Natural killer cell (primary cell): ENCODE measurements at regions of chr1 and their contacts with region 1.

Region 1: DNA sequence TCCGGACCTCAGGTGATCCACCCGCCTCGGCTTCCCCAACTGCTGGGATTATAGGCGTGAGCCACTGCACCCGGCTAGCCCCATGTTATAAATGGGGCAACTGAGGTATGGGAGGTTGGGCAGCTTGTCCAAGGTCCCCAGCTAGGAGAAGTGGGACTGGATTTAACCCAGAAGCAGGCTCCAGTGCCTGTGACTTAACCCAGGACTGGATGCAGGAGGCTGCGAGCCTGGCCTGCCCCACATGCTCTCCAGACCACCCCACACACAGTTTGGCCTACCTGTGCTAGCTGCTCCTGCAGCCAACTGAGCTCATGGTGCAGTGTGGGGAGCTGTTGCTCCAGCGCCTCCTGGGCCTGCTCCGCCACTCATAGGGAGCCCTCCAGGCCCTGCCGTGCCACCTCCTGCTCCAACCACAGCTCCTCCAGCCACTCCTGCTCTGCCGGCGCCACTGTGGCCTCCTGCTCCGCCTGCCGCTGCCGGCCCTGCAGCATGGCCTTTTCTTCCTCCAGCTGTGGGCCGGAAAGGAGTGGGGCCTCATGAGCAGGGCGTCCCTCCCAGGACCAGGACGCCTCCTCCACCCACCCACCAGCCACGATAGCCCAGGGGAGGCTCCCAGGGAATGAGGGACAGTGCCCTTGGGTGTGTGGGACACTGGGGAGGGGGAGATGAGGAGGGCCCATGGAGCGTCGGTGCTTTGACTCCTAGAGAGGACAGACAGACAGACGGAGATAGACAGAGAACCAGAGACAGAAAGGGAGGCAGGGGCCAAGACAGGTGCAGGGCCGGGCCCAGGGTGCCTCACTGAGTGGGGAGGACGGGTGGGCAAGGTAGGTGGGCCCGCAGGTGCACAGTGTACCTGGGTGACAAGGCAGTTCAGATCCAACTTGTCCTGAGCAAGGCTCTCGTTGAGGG is 12.4 kb upstream of the NBPF1 start:
- DNase-seq: peak in 1 of 2 donors; percentile 28
- ATAC-seq: no peak
- H3K4me3 ChIP-seq: no peak overlapping the region
- H3K4me3 Mint-ChIP-seq: no peak overlapping the region
- H3K27ac ChIP-seq: no peak overlapping the region
- H3K27ac Mint-ChIP-seq: peak overlapping the region in 1 of 2 donors; percentile 3
- H3K4me1 ChIP-seq: no peaks in the 10 kb centered on the region
- H3K4me1 Mint-ChIP-seq: peaks cover 0 to 22% of the 10 kb centered on the region in 2 donors
- H3K27me3 ChIP-seq: no peaks in the 10 kb centered on the region
- H3K27me3 Mint-ChIP-seq: no peaks in the 10 kb centered on the region
- CTCF ChIP-seq: no peak

Region 2: DNA sequence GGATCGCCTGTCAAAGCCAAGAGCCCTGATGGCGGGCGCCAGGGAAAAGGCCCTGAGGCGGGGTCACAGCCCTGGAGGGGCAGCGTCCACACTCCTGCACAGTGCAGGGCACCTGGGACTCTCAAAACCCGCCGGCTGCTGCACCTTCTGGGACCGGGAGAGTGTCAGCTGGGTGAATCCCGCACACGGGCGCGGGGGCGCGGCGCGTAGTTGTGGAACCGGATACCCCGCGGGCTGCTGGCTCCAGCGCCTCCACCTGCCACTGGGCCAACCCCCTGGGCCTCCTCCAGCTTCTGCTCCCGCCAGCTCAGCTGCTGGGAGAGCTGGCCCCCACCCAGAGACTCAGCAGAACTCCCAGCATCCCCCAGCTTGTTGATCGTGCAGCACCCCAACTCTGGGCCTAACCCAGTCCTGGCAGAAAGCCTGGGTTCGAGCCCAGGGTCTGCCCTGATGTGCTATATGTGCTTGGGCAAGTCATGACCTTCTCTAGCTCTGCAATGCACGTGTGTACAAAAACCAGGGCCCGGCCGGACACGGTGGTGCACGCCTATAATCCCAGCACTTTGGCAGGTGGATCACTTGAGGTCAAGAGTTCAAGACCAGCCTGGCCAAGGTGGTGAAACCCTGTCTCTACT is 151.5 kb before region 1 on chr1:
- intact Hi-C with region 1: no loop called
- DNase-seq: no peak
- ATAC-seq: no peak
- H3K4me3 ChIP-seq: no peak overlapping the region
- H3K4me3 Mint-ChIP-seq: no peak overlapping the region
- H3K27ac ChIP-seq: no peak overlapping the region
- H3K27ac Mint-ChIP-seq: no peak overlapping the region
- H3K4me1 ChIP-seq: no peaks in the 10 kb centered on the region
- H3K4me1 Mint-ChIP-seq: peaks cover 0 to 8% of the 10 kb centered on the region in 2 donors
- H3K27me3 ChIP-seq: no peaks in the 10 kb centered on the region
- H3K27me3 Mint-ChIP-seq: no peaks in the 10 kb centered on the region
- CTCF ChIP-seq: no peak

Region 3: GRCh38 chr1:16613185-16614147 is 12.3 kb before region 1 on chr1 and contains the start of gene NBPF1:
- intact Hi-C with region 1: loop called (anchors 2 kb)
- DNase-seq: peak; percentile 72 to 93
- ATAC-seq: peak; percentile 81 to 90 (median 89)
- H3K4me3 ChIP-seq: peak within 1 kb of the TSS; percentile 44
- H3K4me3 Mint-ChIP-seq: no peak within 1 kb of the TSS
- H3K27ac ChIP-seq: peak within 1 kb of the TSS; percentile 1
- H3K27ac Mint-ChIP-seq: no peak within 1 kb of the TSS
- H3K4me1 ChIP-seq: peaks cover 22% of the 10 kb centered on the region
- H3K4me1 Mint-ChIP-seq: no peaks in the 10 kb centered on the region
- H3K27me3 ChIP-seq: no peaks in the 10 kb centered on the region
- H3K27me3 Mint-ChIP-seq: no peaks in the 10 kb centered on the region
- CTCF ChIP-seq: no peak
- total RNA-seq, gene NBPF1: 18.4 to 26.0 (median 22.8) TPM